ENCODE measurements at regions of chr5 and their contacts with region 1.

Region 1: GRCh38 chr5:178234750-178235587 is 2.4 kb upstream of the PHYKPL start:
- DNase-seq: peak; percentile 90
- ATAC-seq: peak; percentile 23
- H3K4me3 Mint-ChIP-seq: no peak overlapping the region
- H3K27ac Mint-ChIP-seq: peak overlapping the region; percentile 65
- H3K4me1 Mint-ChIP-seq: peaks cover 84% of the 10 kb centered on the region
- H3K27me3 Mint-ChIP-seq: no peaks in the 10 kb centered on the region

Region 2: GRCh38 chr5:178249191-178249989 is 14.4 kb after region 1 on chr5:
- CTCF ChIA-PET with region 1: interaction called, 22 read pairs
- POLR2A ChIA-PET with region 1: no interaction called
- DNase-seq: peak; percentile 79
- ATAC-seq: peak; percentile 85
- H3K4me3 Mint-ChIP-seq: peak overlapping the region; percentile 46
- H3K27ac Mint-ChIP-seq: peak overlapping the region; percentile 85
- H3K4me1 Mint-ChIP-seq: peaks cover 64% of the 10 kb centered on the region
- H3K27me3 Mint-ChIP-seq: no peaks in the 10 kb centered on the region

Region 3: DNA sequence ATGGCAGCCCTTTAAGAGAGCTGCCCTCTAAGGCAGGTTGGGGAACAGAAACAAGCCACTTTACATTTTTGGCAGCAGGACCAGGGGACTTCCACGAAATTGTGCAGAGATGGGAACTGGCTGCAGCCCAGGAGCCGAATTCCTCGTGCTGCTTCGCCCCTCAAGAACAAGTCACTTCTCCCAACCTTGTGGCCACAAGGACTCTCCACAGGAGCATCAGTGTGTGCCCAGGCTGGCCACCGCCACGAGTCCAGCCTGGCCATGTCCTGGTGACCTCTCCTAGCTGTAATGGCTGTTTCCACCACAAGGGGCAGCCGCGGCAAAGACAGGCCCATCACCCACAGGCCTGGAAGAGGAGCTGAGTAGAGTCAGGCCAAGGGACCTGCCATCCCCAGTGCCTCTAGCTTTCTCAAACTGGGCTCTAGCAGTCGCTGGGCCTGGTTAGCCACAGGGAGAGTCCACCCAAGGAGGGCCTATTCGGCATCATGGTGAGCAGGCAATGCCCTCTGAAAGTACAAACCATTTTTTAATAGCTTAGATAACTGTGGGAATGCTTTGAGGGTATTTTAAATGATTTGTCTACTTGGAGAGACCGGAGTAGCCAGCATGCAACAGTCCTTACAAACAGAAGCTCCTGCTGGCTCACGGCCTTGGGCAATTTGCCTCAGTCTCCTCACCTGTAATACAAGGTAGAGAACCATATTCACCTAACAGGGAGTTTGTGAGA is 226.2 kb after region 1 on chr5:
- CTCF ChIA-PET with region 1: interaction called, 10 read pairs
- POLR2A ChIA-PET with region 1: no interaction called
- DNase-seq: peak; percentile 67
- ATAC-seq: peak; percentile 84
- H3K4me3 Mint-ChIP-seq: no peak overlapping the region
- H3K27ac Mint-ChIP-seq: no peak overlapping the region
- H3K4me1 Mint-ChIP-seq: no peaks in the 10 kb centered on the region
- H3K27me3 Mint-ChIP-seq: peaks cover 4% of the 10 kb centered on the region